ENCODE measurements at regions of chr10 and their contacts with region 1.

Region 1: DNA sequence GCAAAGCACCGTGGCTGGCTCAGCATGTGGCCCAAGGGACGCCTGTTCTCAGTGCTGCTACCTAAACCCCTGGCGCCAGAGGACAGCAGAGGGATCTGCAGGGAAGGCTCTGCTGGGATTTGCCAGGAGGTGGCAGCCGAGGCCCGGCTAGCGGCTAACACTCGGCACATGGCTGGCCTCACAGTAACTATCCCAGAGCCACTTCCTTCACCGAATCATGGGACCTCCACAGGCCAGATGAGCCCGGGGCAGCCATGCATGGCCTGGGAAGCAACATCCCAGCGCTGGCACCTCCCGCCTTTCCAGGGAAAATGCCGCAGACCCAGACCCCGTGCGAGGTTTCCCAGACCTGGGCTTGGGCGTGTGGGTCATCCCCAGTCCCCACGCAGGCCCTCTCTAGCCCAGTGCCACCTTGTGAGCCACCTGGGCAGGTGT is 36.4 kb downstream of the DPYSL4 start:
- DNase-seq: peak; percentile 58 to 72
- H3K4me3 ChIP-seq: no peak overlapping the region
- H3K27ac ChIP-seq: no peak overlapping the region
- H3K4me1 ChIP-seq: peaks cover 0 to 7% of the 10 kb centered on the region in 2 donors
- H3K27me3 ChIP-seq: no peaks in the 10 kb centered on the region
- CTCF ChIP-seq: peak; percentile 82 to 97 (median 86)
- POLR2A ChIP-seq: no peak

Region 2: GRCh38 chr10:132354356-132355094 is 131.4 kb after region 1 on chr10:
- intact Hi-C with region 1: loop called (anchors 5 kb)
- DNase-seq: no peak
- H3K4me3 ChIP-seq: no peak overlapping the region
- H3K27ac ChIP-seq: no peak overlapping the region
- H3K4me1 ChIP-seq: no peaks in the 10 kb centered on the region
- H3K27me3 ChIP-seq: no peaks in the 10 kb centered on the region
- CTCF ChIP-seq: no peak
- POLR2A ChIP-seq: no peak

Region 3: DNA sequence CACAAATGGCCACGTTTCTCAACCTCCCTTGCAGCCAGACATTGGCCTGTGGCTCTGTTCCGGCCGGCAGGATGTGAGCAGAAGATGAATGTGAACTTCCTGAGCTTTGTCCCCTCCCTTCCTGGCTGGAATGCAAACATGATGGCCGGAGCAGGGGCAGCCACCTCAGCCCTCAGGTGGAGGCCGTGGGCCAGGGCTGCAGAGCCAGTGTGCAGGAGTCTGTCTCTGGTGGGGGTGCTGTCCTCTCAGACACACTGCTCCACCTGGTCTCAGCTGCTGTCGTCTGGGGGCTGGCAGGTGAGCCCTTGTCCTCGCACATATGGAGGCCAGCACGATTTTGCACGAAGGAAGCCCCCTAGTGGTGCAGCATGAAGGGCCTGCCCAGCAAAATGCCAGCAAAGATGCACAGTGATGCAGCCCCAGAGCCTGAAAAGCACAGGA is 148.5 kb after region 1 on chr10:
- intact Hi-C with region 1: no loop called
- DNase-seq: no peak
- H3K4me3 ChIP-seq: no peak overlapping the region
- H3K27ac ChIP-seq: no peak overlapping the region
- H3K4me1 ChIP-seq: no peaks in the 10 kb centered on the region
- H3K27me3 ChIP-seq: no peaks in the 10 kb centered on the region
- CTCF ChIP-seq: no peak
- POLR2A ChIP-seq: no peak

Region 4: GRCh38 chr10:132452631-132453469 is 229.7 kb after region 1 on chr10:
- intact Hi-C with region 1: loop called (anchors 5 kb)
- DNase-seq: peak; percentile 82 to 85
- H3K4me3 ChIP-seq: no peak overlapping the region
- H3K27ac ChIP-seq: peak overlapping the region in 1 of 2 donors; percentile 35
- H3K4me1 ChIP-seq: peaks cover 0 to 11% of the 10 kb centered on the region in 2 donors
- H3K27me3 ChIP-seq: no peaks in the 10 kb centered on the region
- CTCF ChIP-seq: peak; percentile 95 to 99 (median 99)
- POLR2A ChIP-seq: no peak